ENCODE measurements at regions of chr6 and their contacts with region 1.

Region 1: GRCh38 chr6:52647199-52647598 is 23.7 kb upstream of the TMEM14A start:
- H3K4me3 ChIP-seq: no peak overlapping the region
- H3K27ac ChIP-seq: no peak overlapping the region
- H3K4me1 ChIP-seq: no peaks in the 10 kb centered on the region; the same call in 1 of the 2 replicates
- CTCF ChIP-seq: no peak

Region 2: DNA sequence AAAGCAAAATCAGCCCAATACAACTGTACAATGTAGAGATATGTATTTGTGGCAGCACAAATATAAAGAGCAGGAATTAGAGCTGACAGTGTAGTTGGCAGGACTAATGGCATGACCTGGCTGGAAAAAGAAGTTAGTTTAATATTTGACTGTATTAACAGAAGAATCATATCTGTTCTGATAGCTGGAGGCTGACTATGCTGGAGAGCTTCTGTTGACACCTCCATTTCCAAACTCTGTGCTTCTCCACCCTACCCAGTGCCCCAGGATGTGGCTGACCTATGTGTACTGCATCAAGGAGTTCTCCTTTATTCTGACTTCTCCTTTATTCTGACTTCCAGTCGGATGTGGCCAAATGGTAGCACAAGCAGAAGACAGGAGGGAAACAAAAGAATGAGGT is 859.1 kb before region 1 on chr6:
- CTCF ChIA-PET with region 1: no interaction called
- POLR2A ChIA-PET with region 1: no interaction called
- H3K4me3 ChIP-seq: no peak overlapping the region
- H3K27ac ChIP-seq: no peak overlapping the region
- H3K4me1 ChIP-seq: no peaks in the 10 kb centered on the region
- CTCF ChIP-seq: no peak

Region 3: GRCh38 chr6:52407467-52407866 is 239.7 kb before region 1 on chr6:
- CTCF ChIA-PET with region 1: interaction called, 35 read pairs
- POLR2A ChIA-PET with region 1: no interaction called
- H3K4me3 ChIP-seq: no peak overlapping the region
- H3K27ac ChIP-seq: no peak overlapping the region
- H3K4me1 ChIP-seq: no peaks in the 10 kb centered on the region
- CTCF ChIP-seq: peak; percentile 64

Region 4: GRCh38 chr6:52590152-52590931 is 56.9 kb before region 1 on chr6:
- CTCF ChIA-PET with region 1: interaction called, 13 read pairs
- POLR2A ChIA-PET with region 1: no interaction called
- H3K4me3 ChIP-seq: no peak overlapping the region
- H3K27ac ChIP-seq: no peak overlapping the region
- H3K4me1 ChIP-seq: peaks cover 6% of the 10 kb centered on the region
- CTCF ChIP-seq: no peak

Region 5: GRCh38 chr6:52670502-52671409 is 23.6 kb after region 1 on chr6 and contains the start of gene TMEM14A:
- CTCF ChIA-PET with region 1: interaction called, 12 read pairs
- POLR2A ChIA-PET with region 1: no interaction called
- H3K4me3 ChIP-seq: peak within 1 kb of the TSS; percentile 65
- H3K27ac ChIP-seq: peak within 1 kb of the TSS; percentile 4; the same call in 1 of the 2 replicates
- H3K4me1 ChIP-seq: peaks cover 2% of the 10 kb centered on the region; the same call in 1 of the 2 replicates
- CTCF ChIP-seq: no peak

Region 6: DNA sequence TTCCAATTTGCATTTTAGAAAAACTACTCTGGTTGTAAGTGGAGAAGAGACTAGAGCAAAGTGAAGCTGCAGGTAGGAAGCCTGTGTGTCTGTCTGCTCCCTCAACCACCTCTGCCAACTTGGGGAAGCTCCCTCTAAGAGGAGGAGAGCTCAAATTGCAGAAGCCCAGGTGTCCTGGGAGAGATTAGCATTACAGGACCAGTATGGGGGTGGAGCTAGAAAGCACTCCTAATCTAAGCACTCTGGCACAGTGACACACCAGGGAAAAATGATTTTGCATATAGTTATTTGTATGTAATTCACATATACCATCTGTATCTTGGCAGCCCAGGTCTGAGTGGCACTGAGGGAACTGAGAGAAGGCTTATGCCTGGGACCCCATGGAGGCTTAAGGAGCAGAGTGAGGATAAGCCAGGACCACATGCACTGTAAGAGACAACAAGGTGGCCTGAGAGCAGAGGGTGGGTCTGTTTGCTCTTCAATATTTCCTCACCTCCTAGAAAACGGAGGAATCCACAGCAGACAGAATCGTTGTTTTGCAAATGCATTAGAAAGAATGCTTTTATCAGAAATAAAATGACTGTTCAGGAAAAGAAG is 102.5 kb after region 1 on chr6:
- CTCF ChIA-PET with region 1: no interaction called
- POLR2A ChIA-PET with region 1: no interaction called
- H3K4me3 ChIP-seq: no peak overlapping the region
- H3K27ac ChIP-seq: no peak overlapping the region
- H3K4me1 ChIP-seq: no peaks in the 10 kb centered on the region
- CTCF ChIP-seq: no peak

Region 7: DNA sequence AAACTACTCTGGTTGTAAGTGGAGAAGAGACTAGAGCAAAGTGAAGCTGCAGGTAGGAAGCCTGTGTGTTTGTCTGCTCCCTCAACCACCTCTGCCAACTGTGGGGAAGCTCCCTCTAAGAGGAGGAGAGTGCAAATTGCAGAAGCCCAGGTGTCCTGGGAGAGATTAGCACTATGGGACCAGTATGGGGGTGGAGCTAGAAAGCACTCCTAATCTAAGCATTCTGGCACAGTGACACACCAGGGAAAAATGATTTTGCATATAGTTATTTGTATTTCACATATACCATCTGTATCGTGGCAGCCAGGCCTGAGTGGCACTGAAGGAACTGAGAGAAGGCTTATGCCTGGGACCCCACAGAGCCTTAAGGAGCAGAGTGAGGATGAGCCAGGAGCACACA is 143.7 kb after region 1 on chr6:
- CTCF ChIA-PET with region 1: no interaction called
- POLR2A ChIA-PET with region 1: no interaction called
- H3K4me3 ChIP-seq: no peak overlapping the region
- H3K27ac ChIP-seq: no peak overlapping the region
- H3K4me1 ChIP-seq: no peaks in the 10 kb centered on the region
- CTCF ChIP-seq: no peak

Region 8: GRCh38 chr6:53294095-53294494 is 646.9 kb after region 1 on chr6:
- CTCF ChIA-PET with region 1: no interaction called
- POLR2A ChIA-PET with region 1: no interaction called
- H3K4me3 ChIP-seq: no peak overlapping the region
- H3K27ac ChIP-seq: no peak overlapping the region
- H3K4me1 ChIP-seq: no peaks in the 10 kb centered on the region; the same call in 1 of the 2 replicates
- CTCF ChIP-seq: peak; percentile 30; the same call in 1 of the 2 replicates

Measured in HEK293 (cell line).